Aorta (tissue), 5 donors: ENCODE measurements at regions of chr12 and their contacts with region 1.

Region 1: DNA sequence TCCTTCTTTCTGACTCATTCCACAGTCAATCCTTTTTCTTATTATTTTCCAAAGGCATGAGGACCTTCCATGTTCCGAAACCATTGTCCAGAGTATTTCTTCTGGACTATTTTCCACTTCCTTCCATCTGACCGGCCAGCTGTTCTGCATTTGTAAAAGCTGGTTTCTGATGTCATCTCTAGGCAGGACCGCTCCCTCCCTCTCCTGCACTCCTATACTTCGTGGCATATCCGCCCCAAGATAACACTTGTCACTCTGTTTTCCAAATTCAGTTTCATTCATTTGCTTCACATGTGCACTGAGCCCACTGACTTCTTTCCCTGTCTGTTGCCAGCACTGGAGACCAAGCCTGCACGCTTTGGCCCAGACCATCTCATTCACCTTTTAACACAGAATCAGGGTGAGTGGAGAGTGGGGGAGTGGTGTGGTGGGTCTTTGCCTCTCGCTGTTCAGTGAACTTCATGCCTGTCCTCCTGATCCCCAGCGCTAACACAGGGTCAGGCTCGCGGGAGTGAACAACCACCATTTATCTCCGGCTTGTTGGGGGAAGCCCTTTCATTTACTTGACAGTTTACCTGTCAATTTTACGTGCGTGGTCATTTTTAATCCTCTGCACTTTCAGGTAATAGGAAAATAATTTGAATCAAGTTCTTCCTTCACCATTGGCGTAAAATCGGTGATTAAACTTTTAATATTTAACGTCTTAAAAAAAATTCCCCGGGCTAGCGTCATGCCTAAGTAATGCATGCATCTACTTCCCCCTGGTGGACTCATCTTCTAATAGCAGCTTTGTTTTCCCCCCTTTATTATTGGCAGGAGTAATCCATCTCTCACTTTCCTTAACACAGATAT is 52.5 kb downstream of the C12orf75 start:
- DNase-seq: no peak
- ATAC-seq: peak; percentile 89
- H3K4me3 ChIP-seq: peak overlapping the region in 1 of 2 donors; percentile 43
- H3K27ac ChIP-seq: no peak overlapping the region
- H3K4me1 ChIP-seq: no peaks in the 10 kb centered on the region
- H3K27me3 ChIP-seq: no peaks in the 10 kb centered on the region

Region 2: DNA sequence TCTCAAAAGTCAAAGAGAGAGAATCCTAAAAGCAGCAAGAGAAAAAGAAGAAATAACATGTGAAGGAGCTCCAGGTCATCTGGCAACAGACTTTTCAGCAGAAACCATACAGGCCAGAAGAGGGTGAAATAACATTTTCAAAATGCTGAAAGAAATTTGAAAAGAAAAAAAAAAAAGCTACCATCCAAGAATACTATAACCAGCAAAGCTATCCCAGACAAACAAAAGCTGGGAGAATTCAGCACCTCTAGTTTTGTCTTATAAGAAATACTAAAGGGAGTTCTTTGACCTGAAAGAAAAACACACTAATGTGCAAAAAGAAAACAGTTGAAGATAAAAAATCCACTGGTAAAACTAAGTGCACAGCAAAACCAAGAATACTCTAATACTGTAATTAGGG is 461.7 kb before region 1 on chr12:
- intact Hi-C with region 1: no loop called
- DNase-seq: no peak
- ATAC-seq: no peak
- H3K4me3 ChIP-seq: no peak overlapping the region
- H3K27ac ChIP-seq: no peak overlapping the region
- H3K4me1 ChIP-seq: peaks cover 0 to 3% of the 10 kb centered on the region in 2 donors
- H3K27me3 ChIP-seq: no peaks in the 10 kb centered on the region

Region 3: DNA sequence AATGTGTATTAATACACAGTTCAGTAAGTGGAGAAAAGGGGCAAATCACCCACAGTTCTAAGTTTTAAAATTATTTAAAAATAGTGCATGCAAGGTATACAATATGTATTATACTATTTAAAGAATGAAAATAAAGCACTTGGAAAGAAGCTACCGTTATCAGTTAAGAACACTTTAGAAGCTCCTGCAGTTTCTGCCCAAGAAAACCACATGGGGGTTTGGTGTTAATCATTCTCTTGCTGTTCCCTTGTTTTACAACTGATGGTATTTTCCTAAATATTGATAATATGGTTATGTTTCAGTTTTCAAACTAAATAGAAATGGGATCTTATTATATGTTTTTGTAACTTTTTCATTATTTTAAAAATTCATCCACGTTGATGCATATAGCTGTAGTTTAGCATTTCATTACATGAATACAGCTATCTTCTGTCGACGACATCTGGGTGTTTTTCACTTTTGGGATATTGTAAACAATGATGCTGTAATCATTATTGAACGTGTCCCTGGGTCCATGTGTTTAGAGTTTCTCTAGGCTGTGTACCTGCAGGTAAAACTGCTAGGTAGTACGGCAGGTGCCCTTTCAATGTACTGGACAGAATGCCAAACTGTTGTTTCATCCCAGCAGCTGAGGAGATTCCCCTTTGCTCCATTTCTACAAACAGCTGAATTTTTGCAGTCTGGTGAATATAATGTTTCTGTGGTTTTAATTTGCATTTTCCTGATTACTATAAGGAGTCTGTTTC is 211.1 kb before region 1 on chr12:
- intact Hi-C with region 1: loop called in 1 of 2 experiments (anchors 10 kb)
- DNase-seq: no peak
- ATAC-seq: no peak
- H3K4me3 ChIP-seq: no peak overlapping the region
- H3K27ac ChIP-seq: no peak overlapping the region
- H3K4me1 ChIP-seq: no peaks in the 10 kb centered on the region
- H3K27me3 ChIP-seq: no peaks in the 10 kb centered on the region

Region 4: DNA sequence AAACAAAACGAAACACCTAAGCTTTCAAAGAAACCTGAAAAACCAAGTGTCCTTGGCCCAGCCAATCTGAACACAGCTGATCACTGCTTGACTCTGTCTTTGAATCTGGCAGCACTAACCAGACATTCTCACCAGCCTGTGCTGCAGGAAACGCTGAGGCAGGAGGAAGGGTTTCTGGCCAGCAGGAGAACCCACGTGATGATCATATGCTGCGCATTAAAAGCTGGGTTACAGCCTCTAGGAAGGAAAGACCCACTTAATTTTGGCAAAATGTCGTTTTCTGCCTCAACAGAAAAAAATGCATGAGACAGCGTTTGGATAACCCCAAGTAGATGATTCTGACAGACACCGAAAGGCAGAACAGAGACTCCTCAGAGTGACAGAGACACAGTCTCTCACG is 156.8 kb before region 1 on chr12:
- intact Hi-C with region 1: loop called in 1 of 2 experiments (anchors 10 kb)
- DNase-seq: peak; percentile 82 to 88
- ATAC-seq: peak; percentile 91
- H3K4me3 ChIP-seq: no peak overlapping the region
- H3K27ac ChIP-seq: peak overlapping the region in 1 of 2 donors; percentile 25
- H3K4me1 ChIP-seq: no peaks in the 10 kb centered on the region
- H3K27me3 ChIP-seq: no peaks in the 10 kb centered on the region

Region 5: DNA sequence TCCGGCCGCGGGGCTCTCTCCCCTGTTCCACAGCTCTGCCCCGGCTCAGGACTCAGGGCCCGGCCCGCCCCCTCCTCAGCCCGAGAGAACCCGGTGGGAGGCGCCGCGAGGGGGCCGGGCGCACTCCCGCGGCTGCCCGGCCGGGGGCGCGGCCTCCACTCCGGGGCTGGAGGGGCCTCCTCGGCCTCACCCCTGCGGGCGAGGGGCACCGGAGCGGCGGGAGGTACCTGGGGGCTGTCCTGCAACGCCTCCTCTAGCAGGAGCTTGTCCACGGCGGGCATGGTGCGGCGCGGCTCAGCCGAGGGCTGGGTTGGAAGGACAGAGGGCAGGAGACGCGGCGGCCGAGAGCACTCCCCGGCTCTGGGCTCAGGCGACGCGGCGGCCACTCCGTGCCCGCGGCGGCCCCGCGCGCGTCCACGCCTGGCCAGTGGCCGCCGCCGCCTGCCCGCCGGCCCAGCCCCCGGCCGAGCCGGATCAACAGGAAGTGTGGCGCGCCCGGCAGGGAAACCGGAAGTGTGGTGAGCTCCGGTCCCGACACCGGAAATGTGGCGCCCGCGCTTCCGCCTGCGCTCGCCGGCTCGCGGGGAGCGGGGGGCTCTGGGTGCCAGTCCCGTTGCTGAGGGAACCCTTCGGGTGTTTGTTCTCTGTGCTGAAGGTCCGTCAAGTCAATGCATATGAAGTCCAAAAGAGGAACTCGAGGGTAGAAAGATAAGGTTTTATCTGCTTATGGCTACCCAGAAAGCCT is 147.1 kb before region 1 on chr12 and contains the start of gene APPL2:
- intact Hi-C with region 1: loop called in 1 of 2 experiments (anchors 5 kb)
- DNase-seq: peak; percentile 96 to 98
- ATAC-seq: peak; percentile 96
- H3K4me3 ChIP-seq: peak within 1 kb of the TSS; percentile 60 to 80
- H3K27ac ChIP-seq: peak within 1 kb of the TSS in 1 of 2 donors; percentile 70
- H3K4me1 ChIP-seq: peaks cover 6 to 11% of the 10 kb centered on the region in 2 donors
- H3K27me3 ChIP-seq: no peaks in the 10 kb centered on the region
- total RNA-seq, gene APPL2: 43.9 to 65.2 TPM

Region 6: DNA sequence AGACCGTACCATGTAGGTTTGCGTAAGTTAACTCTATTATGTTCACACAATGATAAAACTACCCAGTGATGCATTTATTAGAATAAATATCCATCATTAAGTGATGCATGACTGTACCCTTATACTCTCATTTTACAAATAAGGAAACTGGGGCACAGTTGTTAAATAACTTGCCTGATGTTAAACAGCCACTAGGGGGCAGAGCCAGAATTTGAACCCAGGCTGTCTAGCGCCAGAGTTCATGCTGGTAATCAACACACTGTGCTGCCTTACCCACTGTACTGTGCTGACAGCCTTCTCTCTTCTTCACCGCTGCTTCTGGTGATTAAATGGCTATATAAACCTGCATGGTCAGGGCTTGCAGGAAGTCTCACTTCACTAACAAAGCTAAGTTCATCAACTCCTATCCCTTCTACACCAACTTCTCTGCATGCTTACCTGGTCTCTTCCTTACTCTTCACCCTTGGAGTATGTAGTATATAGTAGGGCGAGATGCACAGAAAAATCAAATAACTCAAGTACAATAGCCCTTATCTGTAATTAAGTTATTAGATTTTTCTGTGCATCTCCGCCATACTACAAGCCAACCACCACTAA is 103.4 kb before region 1 on chr12:
- intact Hi-C with region 1: loop called (anchors 2 to 5 kb)
- DNase-seq: peak in 1 of 2 donors; percentile 44
- ATAC-seq: peak; percentile 71
- H3K4me3 ChIP-seq: no peak overlapping the region
- H3K27ac ChIP-seq: no peak overlapping the region
- H3K4me1 ChIP-seq: no peaks in the 10 kb centered on the region
- H3K27me3 ChIP-seq: no peaks in the 10 kb centered on the region

Region 7: GRCh38 chr12:105330283-105330930 is 52.6 kb before region 1 on chr12 and contains the start of gene C12orf75:
- intact Hi-C with region 1: loop called (anchors 2 to 5 kb)
- DNase-seq: peak; percentile 83 to 94
- ATAC-seq: peak; percentile 88
- H3K4me3 ChIP-seq: peak within 1 kb of the TSS; percentile 80 to 95
- H3K27ac ChIP-seq: peak within 1 kb of the TSS in 1 of 2 donors; percentile 4
- H3K4me1 ChIP-seq: peaks cover 0 to 2% of the 10 kb centered on the region in 2 donors
- H3K27me3 ChIP-seq: no peaks in the 10 kb centered on the region
- total RNA-seq, gene C12orf75: 75.9 to 153 TPM

Region 8: GRCh38 chr12:105337391-105337790 is 45.6 kb before region 1 on chr12:
- intact Hi-C with region 1: loop called in 1 of 2 experiments (anchors 5 kb)
- DNase-seq: no peak
- ATAC-seq: no peak
- H3K4me3 ChIP-seq: no peak overlapping the region
- H3K27ac ChIP-seq: no peak overlapping the region
- H3K4me1 ChIP-seq: peaks cover 5% of the 10 kb centered on the region in 2 donors
- H3K27me3 ChIP-seq: no peaks in the 10 kb centered on the region